Heart left ventricle (tissue), 16 donors: ENCODE measurements at regions of chr20 and their contacts with region 1.

Region 1: GRCh38 chr20:14997635-14998185 is 660.3 kb upstream of the FLRT3 start:
- DNase-seq: no peak
- ATAC-seq: no peak
- H3K4me3 ChIP-seq: no peak overlapping the region
- H3K27ac ChIP-seq: no peak overlapping the region
- H3K4me1 ChIP-seq: no peaks in the 10 kb centered on the region
- H3K27me3 ChIP-seq: no peaks in the 10 kb centered on the region
- CTCF ChIP-seq: no peak
- POLR2A ChIP-seq: no peak

Region 2: DNA sequence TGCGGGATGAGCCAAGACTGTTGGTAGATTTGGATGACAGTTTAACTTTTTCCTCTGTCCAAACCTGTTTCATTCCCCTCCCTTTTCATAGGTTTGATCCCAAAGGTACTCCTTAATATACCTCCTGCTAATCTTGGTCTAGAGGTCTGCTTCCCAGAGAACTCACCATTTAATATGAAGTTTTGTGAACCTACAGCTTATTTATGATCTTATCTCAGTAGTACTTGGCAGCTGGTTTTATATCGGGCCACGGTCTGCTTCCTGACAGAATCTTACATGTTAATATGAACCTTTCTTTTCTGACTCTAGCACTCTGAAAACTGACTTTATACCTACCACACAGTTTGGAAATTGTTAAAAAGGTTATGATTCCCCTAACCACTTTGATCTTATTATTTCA is 863.7 kb before region 1 on chr20:
- intact Hi-C with region 1: loop called in 1 of 10 experiments (anchors 10 kb)
- DNase-seq: no peak
- ATAC-seq: no peak
- H3K4me3 ChIP-seq: no peak overlapping the region
- H3K27ac ChIP-seq: no peak overlapping the region
- H3K4me1 ChIP-seq: no peaks in the 10 kb centered on the region
- H3K27me3 ChIP-seq: no peaks in the 10 kb centered on the region
- CTCF ChIP-seq: no peak
- POLR2A ChIP-seq: no peak

Region 3: DNA sequence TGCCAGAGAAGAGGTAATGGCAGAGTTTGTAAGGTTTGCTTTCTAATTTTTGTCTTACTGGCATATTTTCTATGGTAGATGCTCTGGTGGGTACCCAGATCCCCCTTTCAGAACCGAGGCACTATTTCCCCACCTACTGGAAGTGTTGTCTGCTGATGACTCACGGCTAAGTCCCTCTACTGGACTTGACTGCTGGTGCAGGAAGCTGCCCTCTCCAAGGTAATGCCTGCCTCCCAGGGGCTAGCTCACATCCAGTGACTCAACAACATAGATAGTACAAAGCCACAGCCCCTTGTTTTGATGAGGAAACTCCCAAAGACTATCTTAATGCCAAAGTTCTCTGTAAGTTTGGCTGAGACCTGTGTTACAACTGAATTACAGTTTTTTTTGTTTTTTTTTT is 374.9 kb before region 1 on chr20:
- intact Hi-C with region 1: no loop called
- DNase-seq: no peak
- ATAC-seq: no peak
- H3K4me3 ChIP-seq: no peak overlapping the region
- H3K27ac ChIP-seq: no peak overlapping the region
- H3K4me1 ChIP-seq: no peaks in the 10 kb centered on the region
- H3K27me3 ChIP-seq: no peaks in the 10 kb centered on the region
- CTCF ChIP-seq: no peak
- POLR2A ChIP-seq: no peak

Region 4: GRCh38 chr20:14729390-14729789 is 268.3 kb before region 1 on chr20:
- intact Hi-C with region 1: no loop called
- DNase-seq: no peak
- ATAC-seq: no peak
- H3K4me3 ChIP-seq: no peak overlapping the region
- H3K27ac ChIP-seq: no peak overlapping the region
- H3K4me1 ChIP-seq: no peaks in the 10 kb centered on the region
- H3K27me3 ChIP-seq: no peaks in the 10 kb centered on the region
- CTCF ChIP-seq: no peak
- POLR2A ChIP-seq: no peak